HCT116 (cell line): ENCODE measurements at regions of chr1 and their contacts with region 1.

Region 1: GRCh38 chr1:146020058-146021049 is 1.2 kb downstream of the HJV start:
- DNase-seq: no peak
- ATAC-seq: peak; percentile 34; the same call in 1 of the 2 replicates
- H3K4me3 ChIP-seq: no peak overlapping the region
- H3K27ac ChIP-seq: no peak overlapping the region
- H3K4me1 ChIP-seq: no peaks in the 10 kb centered on the region
- H3K27me3 ChIP-seq: no peaks in the 10 kb centered on the region
- CTCF ChIP-seq: no peak
- POLR2A ChIP-seq: no peak
- RAD21 ChIP-seq: no peak

Region 2: GRCh38 chr1:146031476-146031875 is 11.1 kb after region 1 on chr1:
- CTCF ChIA-PET with region 1: interaction called, 11 read pairs
- POLR2A ChIA-PET with region 1: interaction called, 11 read pairs
- RAD21 ChIA-PET with region 1: no interaction called
- intact Hi-C with region 1: loop called (anchors 1 kb)
- DNase-seq: no peak
- ATAC-seq: no peak
- H3K4me3 ChIP-seq: no peak overlapping the region
- H3K27ac ChIP-seq: no peak overlapping the region
- H3K4me1 ChIP-seq: peaks cover 3 to 17% of the 10 kb centered on the region in 2 experiments; a peak in 3 of 4 replicates
- H3K27me3 ChIP-seq: no peaks in the 10 kb centered on the region
- CTCF ChIP-seq: no peak
- POLR2A ChIP-seq: no peak
- RAD21 ChIP-seq: no peak

Region 3: DNA sequence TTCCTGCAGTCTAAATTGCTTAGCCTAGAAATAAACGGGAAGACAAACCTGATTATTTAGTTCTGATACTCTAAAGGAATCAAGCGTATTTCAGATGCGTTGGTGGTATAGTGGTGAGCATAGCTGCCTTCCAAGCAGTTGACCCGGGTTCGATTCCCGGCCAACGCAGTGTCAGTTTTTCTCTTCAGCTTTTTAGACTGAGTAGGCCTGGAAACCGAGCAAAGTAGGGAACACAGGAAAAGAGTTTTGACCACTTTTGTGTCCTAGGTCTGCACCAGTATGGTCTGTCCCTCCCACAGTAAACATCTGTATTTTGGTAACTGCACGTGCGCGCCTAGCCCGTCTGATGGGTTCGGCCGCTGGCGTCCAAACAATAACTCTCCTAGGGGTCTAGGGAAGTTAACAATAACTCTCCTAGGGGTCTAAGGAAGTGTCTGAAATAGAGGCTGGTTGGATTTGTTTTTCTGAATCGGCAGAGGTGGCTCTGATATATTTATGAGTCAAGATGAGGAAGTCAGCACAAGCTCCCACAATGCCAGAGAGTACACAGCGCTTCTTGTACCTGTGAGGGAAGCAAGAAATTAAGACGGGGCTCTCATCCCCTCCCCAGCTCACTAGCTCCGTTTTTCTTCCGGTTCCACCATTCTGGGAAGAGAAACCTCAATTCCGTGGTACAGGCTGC is 16.8 kb after region 1 on chr1:
- CTCF ChIA-PET with region 1: interaction called, 11 read pairs
- POLR2A ChIA-PET with region 1: interaction called, 11 read pairs
- RAD21 ChIA-PET with region 1: no interaction called
- intact Hi-C with region 1: no loop called
- DNase-seq: peak; percentile 75
- ATAC-seq: peak; percentile 39
- H3K4me3 ChIP-seq: peak overlapping the region; percentile 46 to 57
- H3K27ac ChIP-seq: peak overlapping the region; percentile 67
- H3K4me1 ChIP-seq: peaks cover 15 to 48% of the 10 kb centered on the region in 2 experiments
- H3K27me3 ChIP-seq: no peaks in the 10 kb centered on the region
- CTCF ChIP-seq: no peak
- POLR2A ChIP-seq: no peak
- RAD21 ChIP-seq: no peak